Activated CD4-positive, alpha-beta memory T cell treated with anti-CD3 and anti-CD28 coated beads for 36 hours (primary cell): ENCODE measurements at regions of chr4 and their contacts with region 1.

Region 1: DNA sequence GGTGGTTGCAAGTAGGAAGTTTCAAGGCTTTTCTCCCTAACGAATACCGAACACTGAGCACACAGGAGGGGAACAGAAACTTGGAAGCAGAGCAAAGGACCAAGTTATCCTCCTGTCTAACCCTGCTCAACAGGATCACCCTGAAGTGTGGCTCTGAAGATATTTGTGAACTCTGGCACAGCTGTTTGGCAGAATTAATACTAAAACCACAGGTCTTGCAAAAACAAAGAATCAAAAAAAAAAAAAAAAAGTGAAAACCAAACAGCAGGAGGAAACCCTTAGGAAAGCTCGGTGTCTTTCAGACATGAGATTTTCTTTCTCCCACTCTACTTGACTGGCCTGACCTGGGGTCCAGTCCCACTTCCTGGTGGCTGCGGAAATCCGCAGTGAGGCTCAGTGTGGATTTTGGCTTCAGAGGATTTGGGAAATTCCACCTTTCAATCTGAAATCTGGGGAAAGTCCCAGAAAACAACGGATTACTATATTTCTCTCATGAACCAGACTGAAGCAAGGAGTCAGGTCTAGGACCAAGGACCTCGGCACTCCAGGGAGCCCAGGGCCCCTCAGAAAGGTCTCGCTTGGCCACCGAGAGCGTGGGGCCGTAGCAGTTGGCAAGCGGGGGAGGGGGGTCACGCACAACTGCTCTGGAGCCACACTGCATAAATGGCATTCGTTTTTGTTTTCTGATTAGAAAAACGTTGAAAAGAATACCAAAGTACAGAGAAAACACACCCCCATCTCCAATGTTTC is 867 bp downstream of the TIFA start:
- DNase-seq: peak; percentile 39
- H3K4me3 Mint-ChIP-seq: peak overlapping the region; percentile 94
- H3K27ac Mint-ChIP-seq: peak overlapping the region; percentile 97
- H3K4me1 Mint-ChIP-seq: peaks cover 69% of the 10 kb centered on the region
- H3K27me3 Mint-ChIP-seq: no peaks in the 10 kb centered on the region

Region 2: GRCh38 chr4:112145326-112145819 is 139.5 kb before region 1 on chr4 and contains the start of gene FAM241A:
- CTCF ChIA-PET with region 1: no interaction called
- POLR2A ChIA-PET with region 1: interaction called, 4 read pairs
- intact Hi-C with region 1: loop called (anchors 2 kb)
- DNase-seq: peak; percentile 92
- H3K4me3 Mint-ChIP-seq: peak within 1 kb of the TSS; percentile 87
- H3K27ac Mint-ChIP-seq: peak within 1 kb of the TSS; percentile 84
- H3K4me1 Mint-ChIP-seq: peaks cover 42% of the 10 kb centered on the region
- H3K27me3 Mint-ChIP-seq: no peaks in the 10 kb centered on the region
- total RNA-seq, gene FAM241A: 3.1 to 3.5 TPM

Region 3: GRCh38 chr4:112214390-112215264 is 70.2 kb before region 1 on chr4:
- CTCF ChIA-PET with region 1: no interaction called
- POLR2A ChIA-PET with region 1: no interaction called
- intact Hi-C with region 1: no loop called
- DNase-seq: no peak
- H3K4me3 Mint-ChIP-seq: no peak overlapping the region
- H3K27ac Mint-ChIP-seq: no peak overlapping the region
- H3K4me1 Mint-ChIP-seq: peaks cover 8% of the 10 kb centered on the region
- H3K27me3 Mint-ChIP-seq: no peaks in the 10 kb centered on the region

Region 4: DNA sequence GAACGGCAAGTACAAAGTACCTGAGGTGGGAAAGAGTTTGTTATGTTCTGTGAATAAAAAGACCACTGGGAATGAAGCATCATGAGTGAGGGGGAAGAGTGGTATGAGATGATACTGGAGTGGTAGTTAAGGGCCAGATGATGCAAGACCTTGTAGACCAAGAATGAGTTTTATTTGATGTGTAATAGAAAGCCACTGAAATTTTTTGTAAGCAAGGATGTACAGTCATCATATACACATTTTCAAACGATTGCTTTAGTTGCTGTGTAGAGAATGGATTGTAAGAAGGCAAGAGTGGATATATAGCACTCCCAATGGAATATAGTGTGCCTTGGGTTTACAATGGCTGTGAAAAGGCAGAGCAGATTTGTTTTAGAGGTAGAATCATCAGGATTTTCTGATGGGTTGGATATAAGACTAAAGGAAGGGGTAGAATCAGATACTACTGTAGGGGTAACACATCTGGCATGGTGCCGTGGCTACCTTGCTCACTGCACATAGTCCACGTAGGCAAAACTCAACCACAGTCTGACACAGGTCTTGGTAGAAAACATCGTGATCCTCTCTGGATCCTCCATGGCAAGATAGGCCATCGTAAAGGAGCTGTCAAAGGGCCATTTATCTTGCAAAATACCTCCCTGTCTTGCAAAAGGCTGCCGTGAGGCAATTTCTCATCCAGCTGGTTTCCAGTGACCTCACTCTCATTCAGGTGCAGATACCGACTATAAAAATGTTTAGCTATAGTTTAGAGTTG is 14.0 kb before region 1 on chr4:
- CTCF ChIA-PET with region 1: interaction called, 8 read pairs
- POLR2A ChIA-PET with region 1: interaction called, 53 read pairs
- intact Hi-C with region 1: loop called (anchors 1 kb)
- DNase-seq: no peak
- H3K4me3 Mint-ChIP-seq: no peak overlapping the region
- H3K27ac Mint-ChIP-seq: peak overlapping the region; percentile 77
- H3K4me1 Mint-ChIP-seq: peaks cover 60% of the 10 kb centered on the region
- H3K27me3 Mint-ChIP-seq: no peaks in the 10 kb centered on the region

Region 5: DNA sequence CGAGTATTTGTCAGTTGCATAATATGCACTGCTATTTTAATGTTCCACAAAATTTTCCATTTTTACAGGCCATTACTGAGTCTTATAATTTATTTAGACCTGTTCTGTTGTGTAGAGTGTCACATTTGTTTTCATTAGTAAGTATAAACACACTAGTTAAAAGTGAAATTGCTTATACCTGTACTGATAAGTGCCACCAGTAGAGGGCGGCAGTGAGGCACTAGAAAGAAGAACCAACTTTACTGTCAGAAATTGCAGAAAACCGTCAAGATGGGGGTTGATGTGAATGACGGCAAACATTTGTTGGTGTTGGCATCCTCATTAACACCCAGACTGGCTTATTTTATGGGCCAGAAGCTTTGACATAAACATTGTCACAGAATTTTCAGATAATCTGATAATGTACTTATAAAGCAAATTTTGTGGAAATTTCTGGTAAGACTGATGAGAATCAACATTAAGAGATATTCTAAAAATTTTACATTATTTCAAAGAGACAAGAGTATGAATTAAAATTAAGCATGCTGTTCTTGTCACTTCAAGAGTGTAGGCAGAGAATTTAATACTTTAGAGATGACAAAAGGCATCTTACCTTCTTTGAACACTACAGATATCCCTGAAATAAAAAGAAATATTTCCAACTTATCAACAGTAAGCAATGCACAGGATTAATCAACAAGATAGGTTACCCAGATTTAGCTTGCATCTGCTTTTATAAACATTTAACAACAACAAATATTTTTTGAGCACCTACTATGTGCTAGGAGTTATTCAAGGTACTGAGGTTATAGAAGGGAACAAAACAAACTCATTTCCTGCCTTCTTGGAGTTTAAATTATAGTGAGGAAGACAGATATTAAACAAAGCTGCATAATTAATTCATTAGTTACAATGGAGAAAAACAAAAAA is 37.2 kb after region 1 on chr4:
- CTCF ChIA-PET with region 1: interaction called, 9 read pairs
- POLR2A ChIA-PET with region 1: interaction called, 3 read pairs
- intact Hi-C with region 1: loop called (anchors 1 kb)
- DNase-seq: peak; percentile 82
- H3K4me3 Mint-ChIP-seq: no peak overlapping the region
- H3K27ac Mint-ChIP-seq: no peak overlapping the region
- H3K4me1 Mint-ChIP-seq: peaks cover 22% of the 10 kb centered on the region
- H3K27me3 Mint-ChIP-seq: no peaks in the 10 kb centered on the region

Region 6: DNA sequence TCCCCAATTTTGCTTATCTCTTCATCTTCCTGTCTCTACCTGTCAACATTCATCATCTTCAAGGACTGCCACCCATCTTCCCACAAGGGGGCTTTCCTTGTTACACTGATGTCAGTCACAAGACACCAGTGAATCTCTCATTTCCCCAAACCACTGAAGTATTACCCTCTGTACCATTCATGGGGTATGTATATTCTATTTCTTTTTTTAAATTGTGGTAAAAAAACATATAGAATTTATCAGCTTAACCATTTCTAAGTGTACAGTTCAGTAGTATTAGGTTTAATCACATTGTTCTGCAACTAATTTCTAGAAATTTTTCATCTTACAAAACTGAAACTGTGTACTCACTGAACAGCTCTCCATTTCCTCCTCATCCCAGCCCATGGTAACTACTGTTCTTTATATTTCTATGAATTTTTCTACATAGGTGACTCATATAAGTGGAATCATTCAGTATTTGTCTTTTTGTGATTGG is 450.7 kb after region 1 on chr4:
- CTCF ChIA-PET with region 1: no interaction called
- POLR2A ChIA-PET with region 1: no interaction called
- intact Hi-C with region 1: loop called (anchors 5 kb)
- DNase-seq: no peak
- H3K4me3 Mint-ChIP-seq: no peak overlapping the region
- H3K27ac Mint-ChIP-seq: no peak overlapping the region
- H3K4me1 Mint-ChIP-seq: peaks cover 16% of the 10 kb centered on the region
- H3K27me3 Mint-ChIP-seq: no peaks in the 10 kb centered on the region